T-cell (primary cell): ENCODE measurements at regions of chr12 and their contacts with region 1.

Region 1: DNA sequence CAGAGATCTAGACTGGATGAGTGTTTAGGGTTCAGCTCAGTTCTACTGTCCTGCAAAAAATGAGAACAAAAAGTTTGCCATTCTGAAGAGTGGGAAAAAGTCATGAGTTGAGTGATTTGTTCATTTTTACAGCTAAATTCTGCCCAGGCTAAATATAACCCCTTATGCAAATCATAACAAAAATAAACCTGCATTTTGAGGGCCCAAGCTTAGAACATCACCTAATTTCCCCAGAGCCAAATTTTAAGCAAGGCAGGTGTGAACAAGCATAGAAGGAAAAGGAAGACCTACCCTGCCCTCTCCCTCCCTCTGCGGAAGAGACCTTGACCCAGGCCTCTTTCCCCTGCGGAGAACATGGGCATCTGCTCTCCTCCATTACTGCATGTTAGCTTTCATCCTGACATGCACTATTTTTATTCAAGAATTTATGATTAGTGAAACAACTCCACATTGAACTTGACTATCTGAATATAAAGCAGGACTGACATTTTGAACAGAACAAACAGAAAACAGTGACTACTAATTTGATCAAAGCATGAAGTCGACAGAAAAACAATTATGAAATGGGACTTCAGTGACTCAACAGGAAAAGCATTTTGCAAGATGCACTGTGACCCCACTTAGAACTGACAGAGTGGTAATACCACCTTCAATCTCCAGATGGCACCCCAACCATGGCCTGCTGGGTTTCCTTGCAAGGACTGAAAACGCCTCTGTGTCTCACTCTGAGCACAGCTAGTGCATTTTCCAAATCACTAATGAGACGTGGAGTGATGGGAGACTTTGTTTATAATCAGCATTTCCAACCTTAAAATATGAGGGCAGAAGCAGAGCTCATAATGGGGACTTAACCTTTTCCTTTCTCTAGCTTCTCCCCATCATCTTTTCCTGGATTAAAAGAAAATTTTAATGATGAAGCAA is 30.9 kb upstream of the SELPLG start:
- DNase-seq: peak; percentile 63 to 89 (median 77)
- ATAC-seq: peak; percentile 99 to 100 (median 99)
- H3K4me3 ChIP-seq: no peak overlapping the region
- H3K4me3 Mint-ChIP-seq: no peak overlapping the region
- H3K27ac ChIP-seq: peak overlapping the region; percentile 44
- H3K27ac Mint-ChIP-seq: peak overlapping the region; percentile 93 to 94
- H3K4me1 ChIP-seq: no peaks in the 10 kb centered on the region
- H3K4me1 Mint-ChIP-seq: peaks cover 8 to 17% (median 8%) of the 10 kb centered on the region in 3 donors
- H3K27me3 ChIP-seq: no peaks in the 10 kb centered on the region
- H3K27me3 Mint-ChIP-seq: no peaks in the 10 kb centered on the region

Region 2: DNA sequence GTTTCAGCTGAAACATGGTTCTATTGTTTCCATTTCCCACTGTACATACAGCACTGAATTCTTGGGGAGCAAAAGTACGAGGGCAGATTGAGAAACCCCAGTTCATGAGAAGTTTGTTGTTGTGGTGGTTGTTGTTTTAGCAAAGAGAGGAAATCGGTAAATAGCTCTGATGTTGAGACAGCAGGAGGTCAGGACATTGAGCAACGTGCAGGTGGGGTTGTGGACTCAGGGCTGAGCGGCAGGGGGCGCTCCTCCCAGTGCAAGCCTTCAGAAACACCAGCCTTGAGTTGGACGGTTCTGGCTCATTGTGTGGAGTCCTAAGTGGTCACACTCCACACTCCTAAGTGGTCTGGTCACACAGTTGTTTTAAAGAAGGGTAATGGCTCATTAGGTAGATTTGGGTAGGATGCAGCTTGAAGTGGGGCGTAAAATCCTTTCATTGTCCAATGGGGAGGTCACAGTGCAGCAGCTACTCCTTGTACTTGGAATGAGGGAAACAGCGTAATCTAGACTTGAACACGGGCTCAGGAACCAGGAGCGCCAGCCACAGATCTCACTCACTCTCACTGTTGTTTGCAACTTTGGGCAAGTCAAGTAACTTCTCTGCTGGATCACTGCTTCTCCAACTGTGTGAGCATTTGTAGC is 993.5 kb before region 1 on chr12:
- CTCF ChIA-PET with region 1: interaction called in 1 of 2 experiments, 11 read pairs
- POLR2A ChIA-PET with region 1: no interaction called
- DNase-seq: peak in 14 of 35 experiments; percentile 5 to 56 (median 16)
- ATAC-seq: peak in 1 of 4 experiments; percentile 36
- H3K4me3 ChIP-seq: no peak overlapping the region
- H3K4me3 Mint-ChIP-seq: no peak overlapping the region
- H3K27ac ChIP-seq: no peak overlapping the region
- H3K27ac Mint-ChIP-seq: no peak overlapping the region
- H3K4me1 ChIP-seq: no peaks in the 10 kb centered on the region
- H3K4me1 Mint-ChIP-seq: peaks cover 2 to 6% (median 2%) of the 10 kb centered on the region in 3 donors
- H3K27me3 ChIP-seq: peaks cover 0 to 18% of the 10 kb centered on the region in 2 experiments
- H3K27me3 Mint-ChIP-seq: peaks cover 10 to 17% of the 10 kb centered on the region in 2 donors

Region 3: DNA sequence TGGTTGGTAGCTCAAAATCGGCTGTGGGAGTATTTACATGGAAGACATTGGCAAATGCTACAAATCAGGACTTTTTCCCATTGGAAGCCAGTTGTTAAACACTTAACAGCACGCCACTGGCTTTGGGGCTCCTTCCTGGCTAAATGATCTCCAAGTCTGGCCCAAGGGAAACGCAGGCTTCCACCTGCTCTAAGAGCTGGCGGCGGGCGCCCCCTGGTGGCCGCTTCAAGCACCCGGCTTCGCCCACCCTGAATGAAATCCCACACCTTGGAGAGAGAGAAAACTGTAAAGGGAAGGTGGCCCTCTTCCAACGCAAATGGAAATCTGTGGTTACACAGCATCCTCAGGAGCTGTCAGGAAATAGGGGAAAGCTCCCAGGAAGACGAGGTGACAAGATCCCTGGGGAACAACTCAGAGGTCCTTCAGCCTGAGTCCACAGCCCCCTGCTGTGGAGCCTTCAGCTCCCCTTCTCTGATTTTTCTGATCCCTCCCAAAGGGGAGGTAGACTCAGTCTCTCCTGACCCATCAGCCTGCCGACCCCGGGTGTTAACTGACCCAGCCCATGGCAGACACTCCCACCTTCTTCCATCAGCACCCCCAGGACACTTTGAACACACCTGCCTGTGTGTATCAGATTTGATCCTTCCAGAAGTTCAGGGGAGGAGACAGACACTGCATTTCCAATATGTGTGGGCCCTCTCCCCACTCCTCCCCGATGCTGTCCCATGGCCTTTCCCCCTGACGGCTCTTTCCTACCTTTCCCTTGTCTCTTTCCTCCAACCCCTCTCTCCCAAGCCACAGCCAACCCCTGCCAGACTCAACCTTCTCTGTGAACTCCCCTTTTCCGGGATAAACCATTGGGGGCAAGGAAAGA is 46.3 kb before region 1 on chr12:
- CTCF ChIA-PET with region 1: interaction called, 4 to 12 read pairs
- POLR2A ChIA-PET with region 1: no interaction called
- DNase-seq: peak in 34 of 35 experiments; percentile 49 to 89 (median 70)
- ATAC-seq: peak; percentile 57 to 69 (median 62)
- H3K4me3 ChIP-seq: no peak overlapping the region
- H3K4me3 Mint-ChIP-seq: peak overlapping the region in 2 of 3 donors; percentile 2 to 69
- H3K27ac ChIP-seq: peak overlapping the region; percentile 86
- H3K27ac Mint-ChIP-seq: peak overlapping the region; percentile 86 to 87
- H3K4me1 ChIP-seq: peaks cover 22 to 53% of the 10 kb centered on the region in 2 experiments
- H3K4me1 Mint-ChIP-seq: peaks cover 62 to 84% (median 66%) of the 10 kb centered on the region in 3 donors
- H3K27me3 ChIP-seq: no peaks in the 10 kb centered on the region
- H3K27me3 Mint-ChIP-seq: no peaks in the 10 kb centered on the region

Region 4: GRCh38 chr12:108691175-108691997 is 26.8 kb after region 1 on chr12:
- CTCF ChIA-PET with region 1: interaction called in 1 of 2 experiments, 13 read pairs
- POLR2A ChIA-PET with region 1: no interaction called
- DNase-seq: peak; percentile 21 to 69 (median 48)
- ATAC-seq: peak; percentile 63 to 81 (median 76)
- H3K4me3 ChIP-seq: peak overlapping the region; percentile 28 to 45
- H3K4me3 Mint-ChIP-seq: peak overlapping the region; percentile 50 to 81 (median 62)
- H3K27ac ChIP-seq: peak overlapping the region; percentile 55
- H3K27ac Mint-ChIP-seq: peak overlapping the region; percentile 44 to 78
- H3K4me1 ChIP-seq: peaks cover 35 to 46% of the 10 kb centered on the region in 2 experiments
- H3K4me1 Mint-ChIP-seq: peaks cover 62 to 71% (median 67%) of the 10 kb centered on the region in 3 donors
- H3K27me3 ChIP-seq: no peaks in the 10 kb centered on the region
- H3K27me3 Mint-ChIP-seq: no peaks in the 10 kb centered on the region

Region 5: DNA sequence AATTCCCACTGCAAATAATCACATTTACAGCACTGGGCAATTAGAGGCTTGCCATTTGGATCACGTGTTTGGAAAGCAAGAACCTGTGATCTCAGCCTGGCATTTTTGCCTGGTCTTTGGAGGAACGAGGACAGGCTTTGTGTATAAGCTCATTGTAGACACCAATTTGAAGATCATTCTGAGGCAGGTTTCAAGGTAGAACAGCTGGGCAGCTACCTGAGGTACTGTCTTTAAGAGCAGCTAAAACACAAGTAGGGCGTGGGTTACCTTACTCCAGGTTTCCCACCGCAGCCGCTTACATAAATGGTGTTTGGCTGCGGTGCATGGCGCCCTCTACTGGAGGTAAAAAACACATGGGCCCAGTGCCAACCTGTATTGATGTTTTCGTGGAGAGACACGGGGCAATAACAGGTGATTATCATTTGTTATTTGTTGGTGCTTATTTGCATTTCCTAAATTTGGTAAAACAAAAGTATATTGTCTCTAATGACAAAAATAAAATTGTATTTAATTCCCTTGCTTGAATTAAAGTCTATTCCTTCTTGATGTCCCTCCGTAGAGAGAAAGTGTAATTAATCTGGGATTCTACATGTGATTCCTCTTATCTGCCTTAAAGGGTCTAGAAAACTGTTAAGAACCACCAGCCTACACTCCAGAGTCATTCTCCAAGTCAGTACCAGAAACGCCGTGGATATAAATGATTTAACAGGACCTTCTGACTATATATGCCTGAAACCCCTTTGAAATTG is 286.6 kb after region 1 on chr12:
- CTCF ChIA-PET with region 1: interaction called, 4 to 11 read pairs
- POLR2A ChIA-PET with region 1: no interaction called
- DNase-seq: peak; percentile 40 to 85 (median 65)
- ATAC-seq: peak; percentile 70 to 89 (median 73)
- H3K4me3 ChIP-seq: no peak overlapping the region
- H3K4me3 Mint-ChIP-seq: no peak overlapping the region
- H3K27ac ChIP-seq: no peak overlapping the region
- H3K27ac Mint-ChIP-seq: no peak overlapping the region
- H3K4me1 ChIP-seq: peaks cover 0 to 3% of the 10 kb centered on the region in 2 experiments
- H3K4me1 Mint-ChIP-seq: peaks cover 0 to 8% (median 7%) of the 10 kb centered on the region in 3 donors
- H3K27me3 ChIP-seq: no peaks in the 10 kb centered on the region
- H3K27me3 Mint-ChIP-seq: peaks cover 15% of the 10 kb centered on the region in 2 donors